ENCODE measurements at regions of chr20 and their contacts with region 1.

Region 1: DNA sequence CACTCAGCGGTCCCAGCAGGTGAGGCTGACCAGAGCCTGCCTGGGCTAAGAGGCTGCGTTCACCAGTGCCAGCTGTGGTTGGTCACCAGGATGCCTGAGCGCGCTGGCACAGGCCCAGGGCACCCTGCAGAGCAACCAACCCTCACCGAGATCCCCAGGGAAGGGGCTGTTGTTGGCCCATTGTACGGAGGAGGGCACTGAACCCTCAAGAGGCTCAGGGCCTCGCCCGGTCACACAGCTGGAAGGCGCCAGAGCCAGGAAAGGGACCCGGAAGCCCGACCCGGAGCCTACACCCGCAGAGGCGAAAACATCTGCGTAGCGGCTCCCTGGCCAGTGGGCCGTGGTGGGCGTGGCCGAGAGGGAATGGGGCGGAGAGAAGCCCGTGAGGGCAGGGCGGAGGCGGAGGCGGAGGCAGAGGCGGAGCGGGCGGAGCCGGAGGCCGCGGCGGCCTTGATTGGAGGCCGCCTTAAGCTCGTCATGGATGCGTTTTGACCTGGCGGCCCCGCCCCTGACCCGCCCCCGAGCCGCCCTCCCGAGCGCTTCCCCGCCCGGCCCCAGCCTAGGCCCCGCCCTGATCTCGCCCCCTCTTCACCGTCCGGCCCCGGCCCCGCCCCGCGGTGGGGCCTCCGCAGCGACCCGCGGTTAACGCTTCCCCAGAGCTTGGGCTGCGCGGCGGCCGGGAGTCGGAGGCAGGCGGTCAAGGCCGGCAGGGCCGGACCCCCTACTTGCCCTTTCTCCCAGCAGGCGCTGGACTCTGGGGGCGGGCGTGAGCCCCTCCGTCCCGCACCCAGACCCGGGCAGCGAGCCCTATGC is 2.2 kb upstream of the MRGBP start:
- DNase-seq: peak; percentile 99
- ATAC-seq: peak; percentile 83
- H3K4me3 Mint-ChIP-seq: peak overlapping the region; percentile 82
- H3K27ac Mint-ChIP-seq: peak overlapping the region; percentile 92
- H3K4me1 Mint-ChIP-seq: peaks cover 44% of the 10 kb centered on the region
- H3K27me3 Mint-ChIP-seq: no peaks in the 10 kb centered on the region
- CTCF ChIP-seq: no peak

Region 2: GRCh38 chr20:62237801-62238571 is 556.1 kb before region 1 on chr20 and contains the start of gene OSBPL2:
- CTCF ChIA-PET with region 1: no interaction called
- POLR2A ChIA-PET with region 1: no interaction called
- intact Hi-C with region 1: loop called (anchors 1 kb)
- DNase-seq: peak; percentile 100
- ATAC-seq: peak; percentile 98
- H3K4me3 Mint-ChIP-seq: peak within 1 kb of the TSS; percentile 81
- H3K27ac Mint-ChIP-seq: peak within 1 kb of the TSS; percentile 89
- H3K4me1 Mint-ChIP-seq: peaks cover 34% of the 10 kb centered on the region
- H3K27me3 Mint-ChIP-seq: no peaks in the 10 kb centered on the region
- CTCF ChIP-seq: no peak
- total RNA-seq, gene OSBPL2: 40.3 and 43.0 TPM in 2 replicates

Region 3: DNA sequence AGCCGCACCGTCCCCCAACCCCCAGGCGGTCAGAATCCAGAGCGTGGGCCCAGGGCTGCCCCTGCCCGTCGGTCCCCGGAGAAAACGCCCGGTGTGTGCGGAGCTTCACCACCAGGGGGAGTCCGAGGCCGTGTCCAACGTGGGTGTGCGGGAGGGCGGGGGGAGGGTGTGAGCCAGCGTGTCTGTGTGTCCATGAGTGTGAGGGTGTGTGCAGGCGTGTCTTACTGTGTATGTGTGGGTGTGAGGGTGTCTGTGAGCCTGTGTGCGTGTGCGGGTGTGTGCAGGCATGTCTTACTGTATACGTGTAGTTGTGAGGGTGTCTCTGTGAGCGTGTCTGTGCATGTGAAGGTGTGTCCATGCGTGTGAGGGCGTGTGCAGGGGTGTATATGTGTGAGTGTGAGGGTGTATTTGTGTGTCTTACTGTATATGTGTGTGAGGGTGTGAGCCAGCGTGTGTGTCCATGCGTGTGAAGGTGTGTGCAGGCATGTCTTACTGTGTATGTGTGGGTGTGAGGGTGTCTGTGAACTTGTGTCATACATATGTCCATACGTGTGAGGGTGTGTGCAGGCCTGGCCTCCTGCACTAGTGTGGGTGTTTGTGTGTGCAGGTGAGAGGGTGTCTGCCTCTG is 293.8 kb before region 1 on chr20:
- CTCF ChIA-PET with region 1: interaction called, 16 read pairs
- POLR2A ChIA-PET with region 1: interaction called, 3 read pairs
- intact Hi-C with region 1: loop called (anchors 1 kb)
- DNase-seq: peak; percentile 77
- ATAC-seq: peak; percentile 49
- H3K4me3 Mint-ChIP-seq: no peak overlapping the region
- H3K27ac Mint-ChIP-seq: peak overlapping the region; percentile 67
- H3K4me1 Mint-ChIP-seq: peaks cover 42% of the 10 kb centered on the region
- H3K27me3 Mint-ChIP-seq: no peaks in the 10 kb centered on the region
- CTCF ChIP-seq: peak; percentile 33

Region 4: GRCh38 chr20:62642040-62642665 is 152.0 kb before region 1 on chr20 and contains the start of gene SLCO4A1:
- CTCF ChIA-PET with region 1: no interaction called
- POLR2A ChIA-PET with region 1: interaction called, 24 read pairs
- intact Hi-C with region 1: loop called (anchors 1 kb)
- DNase-seq: peak; percentile 90
- ATAC-seq: peak; percentile 91
- H3K4me3 Mint-ChIP-seq: peak within 1 kb of the TSS; percentile 87
- H3K27ac Mint-ChIP-seq: peak within 1 kb of the TSS; percentile 72
- H3K4me1 Mint-ChIP-seq: peaks cover 41% of the 10 kb centered on the region
- H3K27me3 Mint-ChIP-seq: no peaks in the 10 kb centered on the region
- CTCF ChIP-seq: no peak
- total RNA-seq, gene SLCO4A1: 27.8 and 38.9 TPM in 2 replicates

Region 5: DNA sequence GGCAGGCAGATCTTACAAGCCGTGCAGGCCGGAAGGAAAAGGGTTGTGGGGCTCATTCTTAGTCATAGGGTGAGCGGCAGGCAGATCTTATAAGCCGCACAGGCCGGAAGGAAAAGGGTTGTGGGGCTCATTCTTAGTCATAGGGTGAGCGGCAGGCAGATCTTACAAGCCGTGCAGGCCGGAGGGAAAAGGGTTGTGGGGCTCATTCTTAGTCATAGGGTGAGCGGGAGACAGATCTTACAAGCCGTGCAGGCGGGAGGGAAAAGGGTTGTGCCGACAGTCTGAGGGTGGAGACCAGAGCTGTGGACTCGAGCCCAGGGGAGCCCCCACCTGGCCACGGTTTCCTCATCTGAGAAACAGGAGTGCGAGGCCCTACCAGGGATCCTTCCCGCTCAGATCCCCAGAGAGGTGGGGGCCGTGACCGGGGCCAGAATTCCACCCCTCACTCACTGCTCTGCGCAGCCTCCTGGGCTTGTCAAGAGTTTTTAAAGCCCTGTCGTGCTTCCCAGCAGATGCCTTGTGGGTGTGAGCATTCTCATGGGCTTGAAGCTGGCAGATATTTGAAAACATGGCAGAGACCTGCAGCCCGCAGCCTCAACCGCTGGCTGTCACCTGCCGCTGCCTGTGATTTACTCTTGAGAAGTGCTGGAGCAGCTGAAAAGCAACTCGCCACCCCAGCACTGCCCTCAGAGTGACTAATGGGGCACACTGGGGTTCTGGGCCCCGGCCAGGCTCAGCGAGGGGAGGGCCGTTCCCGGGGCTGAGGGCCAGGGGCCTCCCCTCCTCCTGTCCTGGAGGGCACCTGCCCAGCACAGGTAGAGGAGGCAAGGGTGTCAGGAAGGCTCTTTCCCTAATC is 53.6 kb before region 1 on chr20:
- CTCF ChIA-PET with region 1: no interaction called
- POLR2A ChIA-PET with region 1: interaction called, 30 read pairs
- intact Hi-C with region 1: loop called (anchors 1 kb)
- DNase-seq: peak; percentile 55
- ATAC-seq: peak; percentile 85
- H3K4me3 Mint-ChIP-seq: peak overlapping the region; percentile 80
- H3K27ac Mint-ChIP-seq: peak overlapping the region; percentile 86
- H3K4me1 Mint-ChIP-seq: peaks cover 35% of the 10 kb centered on the region
- H3K27me3 Mint-ChIP-seq: no peaks in the 10 kb centered on the region
- CTCF ChIP-seq: no peak

Region 6: DNA sequence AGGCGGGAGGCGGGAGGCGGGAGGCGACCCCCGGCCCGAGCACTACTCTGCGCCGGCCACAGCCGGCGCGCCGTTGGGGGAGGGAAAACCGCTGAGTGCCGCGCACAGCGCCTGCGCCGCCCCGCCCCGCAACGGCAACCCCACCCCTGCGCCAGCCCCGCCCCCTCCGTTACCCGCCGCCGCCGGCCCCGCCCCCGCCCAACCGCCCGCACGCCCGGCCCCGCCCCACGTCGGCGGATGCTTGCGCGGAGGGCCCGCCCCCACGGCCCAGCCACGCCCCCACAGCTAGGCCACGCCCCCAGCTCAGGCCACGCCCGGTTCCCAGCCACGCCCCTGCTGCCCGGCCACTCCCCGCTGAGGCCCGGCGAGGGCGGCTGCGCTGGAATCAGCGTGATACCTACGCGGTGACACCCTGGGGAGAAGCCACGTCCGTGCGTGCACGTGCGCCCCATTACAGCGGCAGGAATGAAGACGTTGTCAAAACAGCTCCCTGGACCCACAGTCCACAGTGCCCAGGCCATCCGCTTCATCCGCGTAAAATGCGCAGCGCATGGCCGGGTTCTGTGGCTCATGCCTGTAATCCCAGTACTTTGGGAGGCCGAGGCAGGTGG is 67.7 kb after region 1 on chr20 and contains the start of gene TCFL5:
- CTCF ChIA-PET with region 1: no interaction called
- POLR2A ChIA-PET with region 1: interaction called, 5 read pairs
- intact Hi-C with region 1: loop called (anchors 5 kb)
- DNase-seq: peak; percentile 99
- ATAC-seq: peak; percentile 90
- H3K4me3 Mint-ChIP-seq: peak within 1 kb of the TSS; percentile 81
- H3K27ac Mint-ChIP-seq: peak within 1 kb of the TSS; percentile 52
- H3K4me1 Mint-ChIP-seq: peaks cover 41% of the 10 kb centered on the region
- H3K27me3 Mint-ChIP-seq: no peaks in the 10 kb centered on the region
- CTCF ChIP-seq: no peak
- total RNA-seq, gene TCFL5: 54.5 and 55.6 TPM in 2 replicates

Measured in activated B cell treated with CpG ODN at 0.5 μM for 24 hours (primary cell).